Cardiac septum (tissue), 1 donor: ENCODE measurements at regions of chr2 and their contacts with region 1.

Region 1: GRCh38 chr2:210399440-210400041 is 77.0 kb downstream of the LANCL1 start:
- DNase-seq: no peak

Region 2: DNA sequence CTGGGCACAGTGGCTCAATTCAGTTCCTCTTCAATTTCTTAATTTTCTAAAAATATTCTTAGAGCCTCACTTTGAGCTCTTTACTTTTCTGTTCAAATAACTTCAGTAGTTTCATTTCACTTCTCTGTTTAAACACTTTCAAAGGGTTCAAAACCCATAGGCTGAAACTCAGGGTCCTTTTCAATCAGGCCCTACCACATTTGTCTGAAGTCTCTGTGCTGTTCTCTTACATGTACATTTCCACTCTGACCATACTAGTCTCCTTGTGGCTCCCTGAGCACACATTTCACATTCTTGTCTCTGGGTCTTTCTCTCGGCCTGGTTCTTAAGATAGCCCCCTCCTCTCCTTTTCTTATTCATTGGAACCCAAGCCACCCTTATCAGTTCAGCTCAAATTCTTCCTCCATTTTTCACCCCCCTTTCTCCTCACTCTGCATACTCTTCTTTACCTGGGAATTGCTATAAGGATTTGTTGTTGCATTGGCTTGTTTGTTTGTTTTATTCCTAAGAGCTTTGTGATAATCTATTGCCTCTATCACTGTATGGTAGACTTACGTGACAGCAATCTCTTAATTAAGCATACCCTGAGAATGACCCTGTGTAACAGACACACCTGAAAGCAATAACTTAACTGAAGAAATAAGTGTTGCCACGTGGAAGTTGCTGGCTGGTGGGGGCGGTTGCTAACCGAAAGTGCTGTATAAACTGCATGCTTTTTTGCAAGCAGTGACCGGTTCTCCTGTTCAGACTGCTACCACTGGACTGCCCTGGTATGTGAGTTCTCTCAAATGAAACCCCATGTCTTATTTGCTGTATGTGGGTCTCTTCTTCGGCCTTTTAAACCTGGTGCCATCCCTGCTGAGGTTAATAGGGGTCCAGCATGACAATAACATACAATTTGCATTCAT is 146.6 kb before region 1 on chr2:
- intact Hi-C with region 1: loop called (anchors 5 kb)
- DNase-seq: no peak

Region 3: DNA sequence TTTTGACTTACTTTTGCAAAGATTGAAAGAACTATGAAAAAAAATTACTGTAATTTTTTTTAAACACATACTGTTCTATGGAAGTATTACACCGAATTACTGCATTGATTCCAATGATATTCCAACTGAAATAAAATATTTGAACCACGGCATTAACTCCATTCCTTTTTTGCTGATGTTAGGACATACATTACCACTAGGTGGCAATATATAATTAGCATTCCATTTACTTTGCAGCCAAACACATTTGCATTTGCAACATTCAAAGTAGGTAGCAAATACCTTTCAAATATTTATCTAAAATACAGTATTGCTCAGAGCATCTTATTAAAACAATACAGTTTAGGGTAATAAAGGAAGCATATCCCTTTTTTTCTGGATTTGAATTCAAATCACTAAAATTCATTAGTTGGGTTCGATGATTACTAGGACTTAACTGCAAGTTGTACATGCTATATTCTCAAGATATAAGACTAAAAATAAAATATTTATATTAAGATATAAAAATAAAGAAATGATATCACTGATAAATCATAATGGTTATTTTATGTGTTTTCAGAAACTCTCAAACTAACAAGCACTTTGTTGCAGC is 45.7 kb after region 1 on chr2:
- intact Hi-C with region 1: no loop called
- DNase-seq: no peak

Region 4: DNA sequence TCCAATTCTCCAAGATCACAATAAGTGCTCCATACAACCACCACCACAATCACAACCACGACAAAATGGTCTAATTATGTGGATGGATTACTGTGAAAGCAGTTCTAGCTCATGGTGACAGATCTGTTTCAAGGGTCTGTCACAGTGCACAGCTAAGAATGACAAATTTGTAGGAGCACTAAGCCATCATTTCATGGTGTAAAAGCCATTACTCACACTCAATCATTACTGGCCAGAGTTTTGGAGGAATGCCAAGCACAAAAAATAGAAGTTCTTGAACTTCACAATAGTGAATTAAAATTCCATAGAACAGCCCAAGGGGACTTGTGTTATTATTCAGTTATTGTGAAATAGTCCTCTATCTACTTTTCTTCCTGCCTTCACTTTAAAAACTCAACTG is 159.2 kb after region 1 on chr2:
- intact Hi-C with region 1: no loop called
- DNase-seq: no peak